AG04450 (cell line): ENCODE measurements at regions of chr12 and their contacts with region 1.

Region 1: DNA sequence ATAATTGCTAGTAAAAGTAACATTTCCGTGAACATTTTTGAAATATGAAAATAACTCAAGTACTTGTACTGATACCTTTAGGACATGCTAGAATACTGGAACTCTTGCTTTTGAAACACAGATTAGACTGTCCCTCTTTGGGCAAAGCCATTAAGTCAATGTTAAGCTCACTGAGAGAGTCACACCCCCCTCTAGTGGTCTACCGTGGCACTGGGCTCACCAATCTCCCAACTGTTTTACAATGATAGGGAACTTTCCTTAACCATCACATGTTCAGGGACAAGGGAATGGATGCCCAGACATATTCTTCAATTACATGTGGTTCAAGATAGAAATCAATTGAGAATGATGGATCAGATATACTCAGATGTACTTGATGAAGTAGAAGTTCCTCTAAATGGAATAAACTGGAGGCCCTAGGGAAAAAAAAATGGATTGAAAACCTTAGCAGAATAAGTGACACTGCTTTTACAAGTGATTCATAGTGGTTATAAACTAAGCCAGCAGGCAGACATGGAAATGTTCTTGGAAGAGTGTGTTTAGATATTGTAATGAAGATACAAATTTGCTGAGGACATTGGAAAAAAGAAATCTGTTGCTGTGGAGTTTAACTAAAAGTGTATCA is 17.8 kb downstream of the NANOG start:
- DNase-seq: peak; percentile 4
- H3K4me3 ChIP-seq: no peak overlapping the region
- H3K27ac ChIP-seq: no peak overlapping the region
- H3K27me3 ChIP-seq: no peaks in the 10 kb centered on the region
- CTCF ChIP-seq: peak; percentile 95

Region 2: DNA sequence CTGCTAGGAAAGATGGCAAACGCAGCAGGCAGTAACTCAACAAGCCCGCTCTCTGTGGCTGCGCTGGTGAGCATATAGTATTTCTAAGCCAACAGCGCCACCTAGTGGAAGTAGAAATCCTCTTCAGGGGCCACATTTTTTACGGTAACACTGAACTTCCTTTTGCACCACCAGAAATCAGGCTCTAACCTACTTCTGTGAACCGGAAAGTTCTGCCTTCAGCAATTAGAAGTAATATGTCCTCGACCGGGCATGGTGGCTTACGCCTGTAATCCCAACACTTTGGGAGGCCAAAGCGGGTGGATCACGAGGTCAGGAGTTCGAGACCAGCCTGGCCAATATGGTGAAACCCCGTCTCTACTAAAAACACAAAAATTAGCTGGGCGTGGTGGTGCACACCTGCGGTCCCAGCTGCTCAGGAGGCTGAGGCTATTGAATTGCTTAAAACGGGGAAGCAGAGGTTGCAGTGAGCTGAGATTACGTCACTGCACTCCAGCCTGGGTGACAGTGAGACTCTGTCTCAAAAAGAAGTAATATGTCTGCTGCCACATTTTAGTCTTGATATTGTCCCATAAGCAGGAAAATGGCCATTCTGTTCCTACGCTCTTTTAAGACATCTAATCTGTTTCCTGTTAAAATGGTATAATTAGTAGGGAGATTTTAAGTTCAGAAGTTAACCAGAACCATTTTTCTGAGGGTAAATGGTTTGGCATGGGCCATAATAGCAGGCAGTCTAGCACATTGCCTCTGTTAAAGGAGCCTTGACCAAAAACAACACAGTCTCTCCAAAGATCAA is 168.0 kb before region 1 on chr12:
- CTCF ChIA-PET with region 1: interaction called, 12 read pairs
- POLR2A ChIA-PET with region 1: no interaction called
- DNase-seq: peak; percentile 37
- H3K4me3 ChIP-seq: no peak overlapping the region
- H3K27ac ChIP-seq: no peak overlapping the region
- H3K27me3 ChIP-seq: peaks cover 4% of the 10 kb centered on the region
- CTCF ChIP-seq: peak; percentile 80

Region 3: GRCh38 chr12:7678738-7679137 is 128.2 kb before region 1 on chr12:
- CTCF ChIA-PET with region 1: interaction called, 20 read pairs
- POLR2A ChIA-PET with region 1: interaction called, 6 read pairs
- DNase-seq: no peak
- H3K4me3 ChIP-seq: no peak overlapping the region
- H3K27ac ChIP-seq: no peak overlapping the region
- H3K27me3 ChIP-seq: no peaks in the 10 kb centered on the region
- CTCF ChIP-seq: no peak

Region 4: GRCh38 chr12:7869127-7869526 is 62.2 kb after region 1 on chr12:
- CTCF ChIA-PET with region 1: no interaction called
- POLR2A ChIA-PET with region 1: no interaction called
- DNase-seq: no peak
- H3K4me3 ChIP-seq: no peak overlapping the region
- H3K27ac ChIP-seq: no peak overlapping the region
- H3K27me3 ChIP-seq: peaks cover 7% of the 10 kb centered on the region
- CTCF ChIP-seq: no peak